A549 (cell line): ENCODE measurements at regions of chr20 and their contacts with region 1.

Region 1: GRCh38 chr20:25044660-25045342 is 13.1 kb downstream of the ACSS1 start:
- DNase-seq: no peak
- ATAC-seq: no peak
- H3K4me3 ChIP-seq: no peak overlapping the region
- H3K27ac ChIP-seq: no peak overlapping the region
- H3K4me1 ChIP-seq: no peaks in the 10 kb centered on the region
- CTCF ChIP-seq: no peak
- EP300 ChIP-seq: no peak
- POLR2A ChIP-seq: no peak
- RAD21 ChIP-seq: no peak

Region 2: GRCh38 chr20:25058051-25058871 is 13.5 kb after region 1 on chr20 and contains the start of gene ACSS1:
- CTCF ChIA-PET with region 1: interaction called, 11 read pairs
- POLR2A ChIA-PET with region 1: interaction called, 3 read pairs
- DNase-seq: peak; percentile 54 to 72
- ATAC-seq: peak; percentile 66 to 68
- H3K4me3 ChIP-seq: peak within 1 kb of the TSS; percentile 90
- H3K27ac ChIP-seq: peak within 1 kb of the TSS; percentile 88 to 89
- H3K4me1 ChIP-seq: peaks cover 48% of the 10 kb centered on the region
- CTCF ChIP-seq: no peak
- EP300 ChIP-seq: no peak
- POLR2A ChIP-seq: peak; percentile 69
- RAD21 ChIP-seq: no peak
- polyA plus RNA-seq, gene ACSS1: 7.2 and 8.5 TPM in 2 replicates